B cell (primary cell): ENCODE measurements at regions of chr7 and their contacts with region 1.

Region 1: GRCh38 chr7:111735661-111736551 is 173.6 kb upstream of the IMMP2L start:
- DNase-seq: peak; percentile 69
- ATAC-seq: no peak
- H3K4me3 ChIP-seq: no peak overlapping the region
- H3K4me3 Mint-ChIP-seq: no peak overlapping the region
- H3K27ac ChIP-seq: no peak overlapping the region
- H3K27ac Mint-ChIP-seq: no peak overlapping the region
- H3K4me1 ChIP-seq: no peaks in the 10 kb centered on the region
- H3K4me1 Mint-ChIP-seq: no peaks in the 10 kb centered on the region
- H3K27me3 ChIP-seq: peaks cover 0 to 3% (median 0%) of the 10 kb centered on the region in 4 experiments
- H3K27me3 Mint-ChIP-seq: peaks cover 11% of the 10 kb centered on the region
- CTCF ChIP-seq: peak; percentile 96

Region 2: DNA sequence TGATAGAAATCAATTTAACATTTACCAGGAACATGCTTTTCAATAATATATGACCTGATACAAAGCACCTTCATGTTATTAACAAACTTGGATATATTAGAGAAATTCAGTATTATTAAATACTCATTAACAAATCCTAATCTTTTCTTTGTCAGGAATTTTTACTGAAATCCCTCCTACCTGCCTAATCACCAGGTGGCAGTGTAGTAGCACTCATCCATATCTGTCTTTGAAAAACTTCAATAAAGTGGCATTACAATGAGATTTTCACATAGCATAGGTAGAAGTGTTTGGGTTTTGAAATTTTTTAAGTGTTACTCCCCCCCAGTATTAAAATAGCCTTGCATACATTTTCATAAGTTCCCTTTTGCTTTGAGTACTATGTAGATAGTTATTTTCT is 1891.5 kb before region 1 on chr7:
- CTCF ChIA-PET with region 1: no interaction called
- POLR2A ChIA-PET with region 1: no interaction called
- intact Hi-C with region 1: loop called (anchors 5 kb)
- DNase-seq: no peak
- ATAC-seq: no peak
- H3K4me3 ChIP-seq: no peak overlapping the region
- H3K4me3 Mint-ChIP-seq: no peak overlapping the region
- H3K27ac ChIP-seq: no peak overlapping the region
- H3K27ac Mint-ChIP-seq: no peak overlapping the region
- H3K4me1 ChIP-seq: no peaks in the 10 kb centered on the region
- H3K4me1 Mint-ChIP-seq: no peaks in the 10 kb centered on the region
- H3K27me3 ChIP-seq: no peaks in the 10 kb centered on the region
- H3K27me3 Mint-ChIP-seq: no peaks in the 10 kb centered on the region
- CTCF ChIP-seq: no peak

Region 3: DNA sequence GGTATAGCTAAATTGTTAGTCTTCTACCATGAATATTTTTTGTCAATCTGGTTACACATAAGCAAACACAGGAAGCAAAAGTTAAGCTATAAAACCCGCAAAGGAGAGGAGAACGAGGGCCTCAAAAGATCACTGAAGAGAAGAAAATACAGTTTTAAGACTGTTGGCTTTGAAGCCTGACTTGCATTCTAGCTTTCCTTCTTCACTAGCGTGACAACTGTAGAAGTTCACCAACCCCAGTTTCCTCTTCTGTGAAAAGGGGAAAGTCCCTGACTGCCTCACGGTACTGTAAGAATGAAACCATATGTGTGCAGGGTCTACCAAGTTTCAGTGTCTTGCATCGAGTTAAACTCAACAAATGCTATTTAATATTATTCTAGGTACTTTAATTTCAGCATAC is 652.5 kb before region 1 on chr7:
- CTCF ChIA-PET with region 1: no interaction called
- POLR2A ChIA-PET with region 1: no interaction called
- intact Hi-C with region 1: loop called (anchors 5 kb)
- DNase-seq: peak; percentile 74
- ATAC-seq: peak; percentile 98
- H3K4me3 ChIP-seq: peak overlapping the region in 1 of 5 experiments; percentile 8
- H3K4me3 Mint-ChIP-seq: peak overlapping the region; percentile 61
- H3K27ac ChIP-seq: peak overlapping the region in 1 of 2 donors; percentile 48
- H3K27ac Mint-ChIP-seq: peak overlapping the region; percentile 88
- H3K4me1 ChIP-seq: peaks cover 12 to 31% of the 10 kb centered on the region in 2 donors
- H3K4me1 Mint-ChIP-seq: peaks cover 38% of the 10 kb centered on the region
- H3K27me3 ChIP-seq: no peaks in the 10 kb centered on the region
- H3K27me3 Mint-ChIP-seq: no peaks in the 10 kb centered on the region
- CTCF ChIP-seq: no peak

Region 4: GRCh38 chr7:111098011-111098925 is 637.6 kb before region 1 on chr7:
- CTCF ChIA-PET with region 1: no interaction called
- POLR2A ChIA-PET with region 1: no interaction called
- intact Hi-C with region 1: loop called (anchors 5 kb)
- DNase-seq: peak; percentile 57
- ATAC-seq: peak; percentile 63
- H3K4me3 ChIP-seq: no peak overlapping the region
- H3K4me3 Mint-ChIP-seq: no peak overlapping the region
- H3K27ac ChIP-seq: no peak overlapping the region
- H3K27ac Mint-ChIP-seq: no peak overlapping the region
- H3K4me1 ChIP-seq: peaks cover 0 to 1% of the 10 kb centered on the region in 2 donors
- H3K4me1 Mint-ChIP-seq: peaks cover 9% of the 10 kb centered on the region
- H3K27me3 ChIP-seq: no peaks in the 10 kb centered on the region
- H3K27me3 Mint-ChIP-seq: no peaks in the 10 kb centered on the region
- CTCF ChIP-seq: peak; percentile 70

Region 5: GRCh38 chr7:111329367-111330234 is 406.3 kb before region 1 on chr7:
- CTCF ChIA-PET with region 1: interaction called, 5 read pairs
- POLR2A ChIA-PET with region 1: no interaction called
- intact Hi-C with region 1: loop called (anchors 10 kb)
- DNase-seq: no peak
- ATAC-seq: no peak
- H3K4me3 ChIP-seq: no peak overlapping the region
- H3K4me3 Mint-ChIP-seq: no peak overlapping the region
- H3K27ac ChIP-seq: no peak overlapping the region
- H3K27ac Mint-ChIP-seq: no peak overlapping the region
- H3K4me1 ChIP-seq: no peaks in the 10 kb centered on the region
- H3K4me1 Mint-ChIP-seq: peaks cover 11% of the 10 kb centered on the region
- H3K27me3 ChIP-seq: no peaks in the 10 kb centered on the region
- H3K27me3 Mint-ChIP-seq: no peaks in the 10 kb centered on the region
- CTCF ChIP-seq: no peak

Region 6: GRCh38 chr7:111486472-111487142 is 249.3 kb before region 1 on chr7:
- CTCF ChIA-PET with region 1: interaction called, 3 read pairs
- POLR2A ChIA-PET with region 1: no interaction called
- intact Hi-C with region 1: loop called (anchors 1 kb)
- DNase-seq: peak; percentile 50
- ATAC-seq: no peak
- H3K4me3 ChIP-seq: no peak overlapping the region
- H3K4me3 Mint-ChIP-seq: no peak overlapping the region
- H3K27ac ChIP-seq: no peak overlapping the region
- H3K27ac Mint-ChIP-seq: no peak overlapping the region
- H3K4me1 ChIP-seq: no peaks in the 10 kb centered on the region
- H3K4me1 Mint-ChIP-seq: no peaks in the 10 kb centered on the region
- H3K27me3 ChIP-seq: no peaks in the 10 kb centered on the region
- H3K27me3 Mint-ChIP-seq: no peaks in the 10 kb centered on the region
- CTCF ChIP-seq: peak; percentile 85

Region 7: DNA sequence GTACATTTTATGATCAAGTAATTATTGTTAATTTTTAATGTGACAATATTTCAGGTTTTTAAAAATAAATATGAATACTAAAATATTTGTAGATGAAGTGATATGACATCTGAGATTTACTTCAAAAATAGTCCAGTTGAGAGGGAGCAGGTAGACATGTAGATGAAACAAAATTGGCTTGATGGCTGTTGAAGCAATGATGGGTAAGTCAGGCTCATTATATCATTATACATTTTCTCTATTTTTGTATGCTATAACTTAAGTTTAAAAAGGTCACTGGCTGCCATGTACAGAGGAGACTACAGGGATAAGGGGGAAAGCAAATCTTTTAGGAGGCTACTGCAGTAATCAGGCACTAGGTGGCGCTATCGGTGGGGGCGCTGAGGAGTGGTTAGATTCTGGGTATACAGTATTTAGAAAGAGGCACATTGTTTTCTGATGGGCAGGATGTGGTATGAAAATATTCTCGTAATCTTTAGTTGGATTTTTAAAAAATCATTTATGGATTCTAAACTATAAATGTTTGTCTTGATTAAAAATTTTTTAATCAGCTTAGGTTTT is 16.2 kb after region 1 on chr7:
- CTCF ChIA-PET with region 1: interaction called, 16 read pairs
- POLR2A ChIA-PET with region 1: no interaction called
- intact Hi-C with region 1: no loop called
- DNase-seq: peak; percentile 46
- ATAC-seq: peak; percentile 41
- H3K4me3 ChIP-seq: no peak overlapping the region
- H3K4me3 Mint-ChIP-seq: no peak overlapping the region
- H3K27ac ChIP-seq: no peak overlapping the region
- H3K27ac Mint-ChIP-seq: no peak overlapping the region
- H3K4me1 ChIP-seq: no peaks in the 10 kb centered on the region
- H3K4me1 Mint-ChIP-seq: no peaks in the 10 kb centered on the region
- H3K27me3 ChIP-seq: no peaks in the 10 kb centered on the region
- H3K27me3 Mint-ChIP-seq: peaks cover 11% of the 10 kb centered on the region
- CTCF ChIP-seq: peak; percentile 74

Region 8: DNA sequence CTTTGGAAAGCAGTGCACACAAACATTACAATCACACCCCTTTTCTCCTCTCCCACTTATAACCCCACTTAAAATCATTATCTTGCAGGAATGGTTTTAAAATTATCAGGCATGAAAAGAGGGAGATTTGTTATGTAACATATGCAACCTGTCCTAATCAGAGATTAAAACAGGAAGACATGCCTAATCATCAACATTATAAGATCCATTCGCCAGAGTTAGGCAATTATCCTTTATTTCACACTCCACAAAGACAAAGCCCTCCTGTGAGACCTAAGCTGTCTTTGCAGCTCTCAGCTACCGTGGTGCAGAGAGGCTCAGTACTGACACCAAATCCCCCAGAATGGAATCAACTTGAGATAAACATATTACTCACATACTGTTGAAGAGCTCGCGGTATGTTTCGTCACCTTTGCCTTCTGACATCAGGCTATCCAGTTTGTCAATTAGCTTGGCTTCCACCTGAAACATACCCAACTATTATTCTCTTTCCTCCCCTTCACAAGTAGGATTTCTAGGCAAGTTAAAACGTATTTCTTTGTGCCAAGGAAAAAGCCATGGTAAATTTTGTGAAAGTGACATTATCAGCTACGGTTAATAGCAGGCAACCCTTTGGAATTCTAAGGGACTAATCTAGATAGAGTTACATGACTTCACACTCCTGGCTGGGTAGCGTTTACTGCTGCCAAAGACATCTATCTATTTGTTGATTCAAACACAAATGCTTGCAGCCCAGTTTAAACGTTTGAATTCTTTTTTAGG is 52.6 kb after region 1 on chr7:
- CTCF ChIA-PET with region 1: no interaction called
- POLR2A ChIA-PET with region 1: no interaction called
- intact Hi-C with region 1: no loop called
- DNase-seq: no peak
- ATAC-seq: no peak
- H3K4me3 ChIP-seq: no peak overlapping the region
- H3K4me3 Mint-ChIP-seq: no peak overlapping the region
- H3K27ac ChIP-seq: no peak overlapping the region
- H3K27ac Mint-ChIP-seq: no peak overlapping the region
- H3K4me1 ChIP-seq: no peaks in the 10 kb centered on the region
- H3K4me1 Mint-ChIP-seq: no peaks in the 10 kb centered on the region
- H3K27me3 ChIP-seq: no peaks in the 10 kb centered on the region
- H3K27me3 Mint-ChIP-seq: peaks cover 7% of the 10 kb centered on the region
- CTCF ChIP-seq: no peak